HepG2 (cell line): ENCODE measurements at regions of chr6 and their contacts with region 1.

Region 1: DNA sequence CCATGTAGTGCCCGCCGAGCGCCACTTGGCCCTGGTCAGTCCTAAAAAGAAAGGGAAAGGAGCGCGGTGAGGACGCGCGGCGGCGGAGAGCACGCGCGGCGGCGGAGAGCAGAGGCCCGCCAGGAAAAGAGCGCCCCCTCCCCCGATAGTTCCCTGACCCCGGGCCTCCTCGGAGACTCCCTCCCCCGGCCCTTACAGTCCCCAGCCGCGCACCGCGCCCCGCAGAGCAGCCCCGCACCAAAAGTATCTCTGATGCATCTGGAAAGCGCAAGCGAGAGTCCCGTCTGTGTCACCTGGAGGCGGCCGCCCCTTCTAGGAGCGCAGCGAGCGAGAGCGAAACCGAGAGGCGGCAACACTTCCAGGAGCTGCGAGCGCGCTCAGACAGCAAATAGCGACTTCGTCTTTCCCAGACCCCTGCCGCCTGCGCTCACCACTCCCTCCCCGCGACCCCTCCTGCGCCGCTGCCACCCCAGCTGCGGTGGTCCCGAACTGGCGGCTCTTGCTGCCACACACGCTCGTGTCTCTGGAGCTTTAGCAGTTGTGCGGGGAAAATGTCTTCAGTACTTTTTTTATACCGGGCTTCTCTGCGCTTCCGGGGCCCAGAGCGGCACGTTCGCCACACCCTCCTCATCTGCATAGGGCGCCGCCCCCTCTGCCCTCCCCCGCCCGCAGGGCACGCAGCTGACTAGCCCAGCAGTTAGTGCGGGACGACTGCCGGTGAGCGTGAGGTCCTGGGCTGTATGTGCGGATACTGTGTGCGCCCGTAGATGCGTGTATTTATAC is at the start of gene TENT5A:
- DNase-seq: peak; percentile 83
- ATAC-seq: peak; percentile 89
- H3K4me3 ChIP-seq: peak within 1 kb of the TSS; percentile 79 to 91 (median 90)
- H3K27ac ChIP-seq: peak within 1 kb of the TSS; percentile 92
- H3K4me1 ChIP-seq: peaks cover 47% of the 10 kb centered on the region
- H3K27me3 ChIP-seq: no peaks in the 10 kb centered on the region
- CTCF ChIP-seq: peak; percentile 48; the same call in 1 of the 2 replicates
- EP300 ChIP-seq: no peak; a peak in 1 of 4 replicates
- POLR2A ChIP-seq: peak; percentile 59 to 78; a peak in 3 of 4 replicates
- RAD21 ChIP-seq: 0 out of 2 replicates have a peak, but pooled peaks have one; percentile 5
- total RNA-seq, gene TENT5A: 13.8 and 15.4 TPM in 2 replicates

Region 2: DNA sequence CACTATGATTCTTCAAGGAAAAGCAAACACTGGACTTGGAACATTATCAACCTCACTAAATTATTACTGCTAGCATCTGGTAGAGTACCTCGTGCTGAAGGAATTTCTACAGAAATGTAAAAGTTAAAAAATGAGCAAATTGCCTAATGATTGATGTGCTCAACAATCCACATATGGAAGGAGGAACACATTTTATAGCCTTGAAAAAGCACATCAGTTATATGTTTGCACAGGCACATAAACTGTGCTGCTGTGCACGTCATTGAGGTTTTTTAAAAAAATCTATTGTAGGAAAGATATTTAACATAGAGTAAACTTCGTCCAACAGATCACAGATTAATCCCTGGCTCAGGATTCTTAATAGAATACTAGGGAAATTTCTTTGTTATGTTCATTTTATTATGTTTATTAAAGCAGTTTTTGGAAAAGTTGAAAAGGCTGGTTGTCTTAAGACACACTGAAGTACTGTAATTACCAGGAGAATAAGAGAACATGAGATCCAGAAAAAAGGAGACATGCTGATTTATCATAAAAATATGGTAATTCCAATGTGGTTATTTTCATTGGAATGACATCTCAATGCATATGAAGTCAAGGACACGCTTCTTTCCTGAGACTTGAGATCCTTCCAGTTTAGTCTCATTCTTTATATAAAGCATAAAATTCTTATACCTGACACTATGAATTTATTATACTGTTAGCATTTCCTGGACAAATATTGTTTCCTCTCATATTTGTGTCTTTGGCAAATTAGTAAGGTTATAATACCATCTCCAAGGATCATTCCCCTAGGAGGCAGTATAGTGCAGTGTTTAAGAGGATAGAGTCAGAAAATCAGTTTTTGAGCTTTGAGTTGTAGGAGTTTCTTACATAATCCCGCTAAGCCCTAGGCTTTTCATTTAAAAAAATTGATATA is 510.9 kb before region 1 on chr6:
- CTCF ChIA-PET with region 1: no interaction called
- POLR2A ChIA-PET with region 1: no interaction called
- in situ Hi-C with region 1: no loop called
- intact Hi-C with region 1: loop called (anchors 2 kb)
- DNase-seq: peak; percentile 38
- ATAC-seq: peak; percentile 55
- H3K4me3 ChIP-seq: no peak overlapping the region
- H3K27ac ChIP-seq: no peak overlapping the region
- H3K4me1 ChIP-seq: no peaks in the 10 kb centered on the region
- H3K27me3 ChIP-seq: no peaks in the 10 kb centered on the region
- CTCF ChIP-seq: peak; percentile 62
- EP300 ChIP-seq: no peak
- POLR2A ChIP-seq: no peak
- RAD21 ChIP-seq: no peak

Region 3: GRCh38 chr6:81766482-81767069 is 14.2 kb after region 1 on chr6:
- CTCF ChIA-PET with region 1: no interaction called
- POLR2A ChIA-PET with region 1: interaction called, 50 read pairs
- in situ Hi-C with region 1: no loop called
- intact Hi-C with region 1: no loop called
- DNase-seq: peak; percentile 78
- ATAC-seq: peak; percentile 80
- H3K4me3 ChIP-seq: peak overlapping the region in 1 of 3 experiments; percentile 41; a peak in 1 of 6 replicates
- H3K27ac ChIP-seq: peak overlapping the region; percentile 14
- H3K4me1 ChIP-seq: peaks cover 84% of the 10 kb centered on the region
- H3K27me3 ChIP-seq: no peaks in the 10 kb centered on the region
- CTCF ChIP-seq: no peak
- EP300 ChIP-seq: peak in 1 of 2 experiments; percentile 77; a peak in 2 of 4 replicates
- POLR2A ChIP-seq: no peak
- RAD21 ChIP-seq: no peak

Region 4: GRCh38 chr6:81808851-81809570 is 56.7 kb after region 1 on chr6:
- CTCF ChIA-PET with region 1: no interaction called
- POLR2A ChIA-PET with region 1: no interaction called
- in situ Hi-C with region 1: no loop called
- intact Hi-C with region 1: loop called (anchors 5 kb)
- DNase-seq: no peak
- ATAC-seq: no peak
- H3K4me3 ChIP-seq: no peak overlapping the region
- H3K27ac ChIP-seq: no peak overlapping the region
- H3K4me1 ChIP-seq: peaks cover 30% of the 10 kb centered on the region
- H3K27me3 ChIP-seq: no peaks in the 10 kb centered on the region
- CTCF ChIP-seq: no peak
- EP300 ChIP-seq: no peak
- POLR2A ChIP-seq: no peak
- RAD21 ChIP-seq: no peak

Region 5: DNA sequence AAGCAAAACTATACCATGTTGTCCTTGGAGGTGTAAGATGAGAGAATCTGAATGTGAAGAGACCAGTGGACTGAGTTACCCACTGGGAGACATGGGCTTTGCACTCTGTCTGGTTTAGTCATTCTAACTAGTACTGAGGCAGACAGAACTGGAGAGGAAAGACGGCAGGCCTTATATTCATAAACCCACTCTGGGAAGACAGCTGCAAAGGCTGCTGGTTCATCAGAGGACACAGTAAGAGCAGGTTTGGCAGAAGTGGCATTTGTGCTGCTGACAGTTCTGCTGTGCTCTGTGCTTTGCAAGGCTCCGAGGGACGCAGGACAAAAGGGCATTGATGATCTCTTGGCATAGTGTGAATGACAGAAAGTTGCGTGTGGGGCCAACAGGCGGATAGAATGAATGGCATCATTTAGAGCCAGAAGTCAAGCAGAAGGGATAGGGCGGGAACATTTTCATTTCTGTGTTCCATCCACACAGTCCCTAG is 142.5 kb after region 1 on chr6:
- CTCF ChIA-PET with region 1: interaction called, 3 read pairs
- POLR2A ChIA-PET with region 1: interaction called, 8 read pairs
- in situ Hi-C with region 1: no loop called
- intact Hi-C with region 1: loop called (anchors 1 kb)
- DNase-seq: peak; percentile 67
- ATAC-seq: peak; percentile 83
- H3K4me3 ChIP-seq: no peak overlapping the region; a peak in 1 of 6 replicates
- H3K27ac ChIP-seq: no peak overlapping the region
- H3K4me1 ChIP-seq: peaks cover 49% of the 10 kb centered on the region
- H3K27me3 ChIP-seq: no peaks in the 10 kb centered on the region
- CTCF ChIP-seq: no peak
- EP300 ChIP-seq: no peak
- POLR2A ChIP-seq: no peak
- RAD21 ChIP-seq: no peak

Region 6: GRCh38 chr6:82006027-82006738 is 253.9 kb after region 1 on chr6:
- CTCF ChIA-PET with region 1: no interaction called
- POLR2A ChIA-PET with region 1: interaction called, 6 read pairs
- in situ Hi-C with region 1: no loop called
- intact Hi-C with region 1: loop called (anchors 2 kb)
- DNase-seq: peak; percentile 57
- ATAC-seq: peak; percentile 94
- H3K4me3 ChIP-seq: no peak overlapping the region
- H3K27ac ChIP-seq: no peak overlapping the region
- H3K4me1 ChIP-seq: 0 out of 2 replicates have a peak, but pooled peaks cover 4% of the 10 kb centered on the region
- H3K27me3 ChIP-seq: no peaks in the 10 kb centered on the region
- CTCF ChIP-seq: peak; percentile 84
- EP300 ChIP-seq: no peak
- POLR2A ChIP-seq: no peak
- RAD21 ChIP-seq: peak; percentile 78

Region 7: GRCh38 chr6:82178077-82178758 is 425.9 kb after region 1 on chr6:
- CTCF ChIA-PET with region 1: no interaction called
- POLR2A ChIA-PET with region 1: no interaction called
- in situ Hi-C with region 1: no loop called
- intact Hi-C with region 1: loop called (anchors 5 kb)
- DNase-seq: peak; percentile 5
- ATAC-seq: peak; percentile 43; the same call in 1 of the 3 replicates
- H3K4me3 ChIP-seq: no peak overlapping the region
- H3K27ac ChIP-seq: no peak overlapping the region
- H3K4me1 ChIP-seq: no peaks in the 10 kb centered on the region
- H3K27me3 ChIP-seq: no peaks in the 10 kb centered on the region
- CTCF ChIP-seq: peak; percentile 45; the same call in 1 of the 2 replicates
- EP300 ChIP-seq: no peak
- POLR2A ChIP-seq: no peak
- RAD21 ChIP-seq: no peak